Mammary epithelial cell (primary cell): ENCODE measurements at regions of chr2 and their contacts with region 1.

Region 1: DNA sequence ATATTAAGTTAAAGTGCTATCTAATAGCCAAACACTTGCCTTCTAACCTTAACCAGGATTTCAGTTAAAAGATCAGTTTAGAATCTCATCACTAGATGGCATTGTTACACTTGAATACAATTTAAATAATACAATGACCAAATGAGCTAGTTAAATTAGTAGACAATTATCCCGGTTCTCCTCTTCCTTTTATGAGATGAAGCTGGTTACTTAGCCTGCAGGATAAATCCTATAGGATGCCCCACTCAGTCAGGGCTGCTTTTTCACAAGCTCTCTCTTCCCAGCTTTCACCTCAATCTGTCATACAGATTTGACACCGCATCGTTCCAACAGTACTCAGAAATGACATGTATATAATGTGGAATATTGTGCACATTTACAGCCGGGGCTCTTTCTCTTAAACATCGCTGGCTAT is 678.8 kb downstream of the KCNJ3 start:
- DNase-seq: peak; percentile 5
- H3K4me3 ChIP-seq: no peak overlapping the region
- H3K27ac ChIP-seq: no peak overlapping the region
- H3K4me1 ChIP-seq: no peaks in the 10 kb centered on the region
- H3K27me3 ChIP-seq: no peaks in the 10 kb centered on the region
- CTCF ChIP-seq: peak; percentile 19 to 40

Region 2: GRCh38 chr2:155266583-155266982 is 110.7 kb before region 1 on chr2:
- CTCF ChIA-PET with region 1: no interaction called
- dilution Hi-C with region 1: no loop called
- in situ Hi-C with region 1: no loop called
- intact Hi-C with region 1: no loop called
- DNase-seq: no peak
- H3K4me3 ChIP-seq: no peak overlapping the region
- H3K27ac ChIP-seq: no peak overlapping the region
- H3K4me1 ChIP-seq: no peaks in the 10 kb centered on the region
- H3K27me3 ChIP-seq: no peaks in the 10 kb centered on the region
- CTCF ChIP-seq: peak in 1 of 2 donors; percentile 5

Region 3: GRCh38 chr2:155815886-155816285 is 438.6 kb after region 1 on chr2:
- CTCF ChIA-PET with region 1: interaction called, 8 read pairs
- dilution Hi-C with region 1: no loop called
- in situ Hi-C with region 1: no loop called
- intact Hi-C with region 1: loop called (anchors 5 kb)
- DNase-seq: peak; percentile 22
- H3K4me3 ChIP-seq: no peak overlapping the region
- H3K27ac ChIP-seq: no peak overlapping the region
- H3K4me1 ChIP-seq: no peaks in the 10 kb centered on the region
- H3K27me3 ChIP-seq: no peaks in the 10 kb centered on the region
- CTCF ChIP-seq: peak; percentile 18 to 53

Region 4: GRCh38 chr2:156065905-156066304 is 688.6 kb after region 1 on chr2:
- CTCF ChIA-PET with region 1: no interaction called
- dilution Hi-C with region 1: no loop called
- in situ Hi-C with region 1: no loop called
- intact Hi-C with region 1: loop called (anchors 10 kb)
- DNase-seq: no peak
- H3K4me3 ChIP-seq: no peak overlapping the region
- H3K27ac ChIP-seq: no peak overlapping the region
- H3K4me1 ChIP-seq: peaks cover 8% of the 10 kb centered on the region
- H3K27me3 ChIP-seq: no peaks in the 10 kb centered on the region
- CTCF ChIP-seq: peak; percentile 47 to 64

Region 5: DNA sequence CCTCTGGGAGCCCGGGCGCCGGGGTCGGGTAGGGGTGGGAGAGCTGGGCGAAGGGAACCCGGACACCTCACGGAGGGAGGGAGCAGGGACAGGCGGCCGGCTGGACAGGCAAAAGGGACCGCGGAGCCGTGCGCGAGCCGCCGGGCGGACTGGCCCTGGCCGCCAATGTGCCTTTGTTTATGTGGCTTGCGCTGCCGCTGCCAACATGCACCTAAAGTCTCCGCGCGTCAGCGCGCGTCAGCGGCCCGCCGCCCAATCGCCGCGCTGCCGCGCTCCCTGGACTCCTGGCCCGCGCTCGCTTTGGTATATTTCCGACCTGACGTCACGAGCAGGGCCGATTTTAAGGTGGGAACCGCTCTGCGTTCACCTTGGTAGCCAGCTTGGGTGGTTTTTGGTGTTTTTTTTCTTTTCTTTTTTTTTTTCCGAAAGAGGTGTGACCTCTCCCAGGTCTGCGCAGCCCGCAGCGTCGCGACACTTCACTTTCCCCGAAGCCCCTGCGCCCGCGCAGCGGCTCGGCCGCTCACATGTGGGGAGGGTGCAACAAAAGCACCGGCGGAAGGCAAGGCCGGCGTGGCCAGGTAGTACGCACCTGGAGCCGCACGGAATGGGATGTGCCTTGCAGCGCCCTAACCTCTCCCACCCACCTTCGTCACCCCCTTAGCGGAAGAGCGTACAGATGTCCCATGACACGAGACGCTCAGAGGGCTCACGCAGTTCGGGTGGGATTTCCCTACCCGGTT is 955.4 kb after region 1 on chr2 and contains the start of gene NR4A2:
- CTCF ChIA-PET with region 1: no interaction called
- dilution Hi-C with region 1: no loop called
- in situ Hi-C with region 1: no loop called
- intact Hi-C with region 1: loop called (anchors 5 kb)
- DNase-seq: peak; percentile 92
- H3K4me3 ChIP-seq: peak within 1 kb of the TSS; percentile 66 to 86 (median 80)
- H3K27ac ChIP-seq: peak within 1 kb of the TSS; percentile 95
- H3K4me1 ChIP-seq: peaks cover 23% of the 10 kb centered on the region
- H3K27me3 ChIP-seq: no peaks in the 10 kb centered on the region
- CTCF ChIP-seq: no peak
- total RNA-seq, gene NR4A2: 0.50 to 1.3 TPM

Region 6: GRCh38 chr2:157055660-157056199 is 1678.5 kb after region 1 on chr2:
- CTCF ChIA-PET with region 1: interaction called, 3 read pairs
- dilution Hi-C with region 1: no loop called
- in situ Hi-C with region 1: loop called in 1 of 2 experiments (anchors 25 kb)
- intact Hi-C with region 1: loop called (anchors 5 kb)
- DNase-seq: peak; percentile 25
- H3K4me3 ChIP-seq: no peak overlapping the region
- H3K27ac ChIP-seq: no peak overlapping the region
- H3K4me1 ChIP-seq: peaks cover 16% of the 10 kb centered on the region
- H3K27me3 ChIP-seq: peaks cover 3% of the 10 kb centered on the region
- CTCF ChIP-seq: peak; percentile 56 to 58

Region 7: GRCh38 chr2:157194097-157194688 is 1816.9 kb after region 1 on chr2:
- CTCF ChIA-PET with region 1: interaction called, 8 read pairs
- dilution Hi-C with region 1: no loop called
- in situ Hi-C with region 1: loop called (anchors 25 kb)
- intact Hi-C with region 1: loop called (anchors 2 kb)
- DNase-seq: peak; percentile 49
- H3K4me3 ChIP-seq: no peak overlapping the region
- H3K27ac ChIP-seq: no peak overlapping the region
- H3K4me1 ChIP-seq: no peaks in the 10 kb centered on the region
- H3K27me3 ChIP-seq: no peaks in the 10 kb centered on the region
- CTCF ChIP-seq: peak; percentile 75 to 84